Gastrocnemius medialis (tissue), 4 donors: ENCODE measurements at regions of chr1 and their contacts with region 1.

Region 1: DNA sequence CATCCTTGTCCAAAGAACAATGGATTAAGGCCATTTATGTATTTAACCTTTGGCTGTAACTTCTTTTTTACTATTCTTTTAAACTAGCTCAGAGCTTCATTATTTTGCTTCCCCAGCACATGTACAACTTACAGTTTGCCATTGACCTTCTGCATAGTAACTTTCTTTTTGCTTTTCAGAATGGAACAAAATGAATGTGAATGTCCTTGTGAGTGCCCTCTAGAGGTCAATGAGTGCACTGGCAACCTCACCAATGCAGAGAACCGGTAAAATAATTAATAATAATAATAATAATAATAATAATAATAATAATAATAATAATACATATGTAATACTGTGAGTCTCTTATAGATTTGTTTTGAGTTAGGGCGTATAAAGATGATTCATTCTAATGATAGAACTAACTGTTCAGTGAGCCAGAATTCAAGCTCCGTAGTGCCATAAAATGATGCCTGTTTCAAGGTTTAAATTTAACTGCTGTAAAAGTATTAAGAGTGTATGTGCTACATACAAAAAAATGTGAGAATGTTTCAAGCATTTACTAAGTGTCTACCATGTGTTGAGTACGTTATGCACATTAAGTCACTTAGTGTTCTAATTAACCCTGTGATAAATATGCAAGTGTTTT is 69.0 kb upstream of the RAVER2 start:
- DNase-seq: no peak
- ATAC-seq: no peak
- H3K4me3 ChIP-seq: no peak overlapping the region
- H3K27ac ChIP-seq: no peak overlapping the region
- H3K4me1 ChIP-seq: peaks cover under 1 to 6% of the 10 kb centered on the region in 2 donors
- H3K27me3 ChIP-seq: no peaks in the 10 kb centered on the region
- CTCF ChIP-seq: peak in 4 of 5 experiments; percentile 7 to 70 (median 34)
- POLR2A ChIP-seq: no peak

Region 2: GRCh38 chr1:64268653-64269557 is 406.9 kb before region 1 on chr1:
- in situ Hi-C with region 1: loop called (anchors 10 to 25 kb)
- intact Hi-C with region 1: loop called (anchors 2 kb)
- DNase-seq: peak; percentile 45 to 47
- ATAC-seq: peak; percentile 77 to 83
- H3K4me3 ChIP-seq: no peak overlapping the region
- H3K27ac ChIP-seq: no peak overlapping the region
- H3K4me1 ChIP-seq: no peaks in the 10 kb centered on the region
- H3K27me3 ChIP-seq: no peaks in the 10 kb centered on the region
- CTCF ChIP-seq: peak; percentile 52 to 79 (median 63)
- POLR2A ChIP-seq: no peak

Region 3: GRCh38 chr1:64469977-64470664 is 205.7 kb before region 1 on chr1 and contains the start of gene CACHD1:
- in situ Hi-C with region 1: loop called in 3 of 4 experiments (anchors 10 to 25 kb)
- intact Hi-C with region 1: loop called (anchors 5 kb)
- DNase-seq: peak; percentile 32 to 59
- ATAC-seq: peak; percentile 74 to 80
- H3K4me3 ChIP-seq: peak within 1 kb of the TSS; percentile 65 to 85 (median 76)
- H3K27ac ChIP-seq: peak within 1 kb of the TSS; percentile 65 to 78 (median 77)
- H3K4me1 ChIP-seq: peaks cover 8 to 16% of the 10 kb centered on the region in 2 donors
- H3K27me3 ChIP-seq: no peaks in the 10 kb centered on the region
- CTCF ChIP-seq: peak; percentile 21 to 56 (median 32)
- POLR2A ChIP-seq: peak in 1 of 2 donors; percentile 31
- total RNA-seq, gene CACHD1: 2.2 to 3.6 (median 2.9) TPM

Region 4: DNA sequence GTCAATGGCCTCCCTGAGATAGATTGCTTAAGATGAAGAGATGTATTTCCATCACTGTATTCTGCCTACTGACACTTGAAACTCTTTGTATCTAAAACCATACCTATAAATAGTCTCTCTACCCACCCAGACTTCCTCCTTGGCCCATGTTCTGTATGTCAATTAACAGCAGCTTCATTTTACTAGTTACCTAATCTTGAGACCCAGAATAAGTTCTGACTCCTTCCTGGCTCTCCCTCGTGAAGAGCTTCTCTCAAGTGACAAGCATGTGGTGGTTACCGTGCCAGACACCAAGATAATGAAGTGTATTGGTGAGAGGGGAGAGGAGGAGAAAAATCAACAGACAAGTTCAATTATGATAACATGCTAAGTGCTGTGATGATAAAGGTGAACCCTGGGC is 59.8 kb before region 1 on chr1:
- in situ Hi-C with region 1: no loop called
- intact Hi-C with region 1: loop called (anchors 5 kb)
- DNase-seq: peak; percentile 63 to 73
- ATAC-seq: peak; percentile 99 to 100
- H3K4me3 ChIP-seq: no peak overlapping the region
- H3K27ac ChIP-seq: peak overlapping the region; percentile 66 to 80 (median 76)
- H3K4me1 ChIP-seq: peaks cover 14 to 17% of the 10 kb centered on the region in 2 donors
- H3K27me3 ChIP-seq: no peaks in the 10 kb centered on the region
- CTCF ChIP-seq: no peak
- POLR2A ChIP-seq: peak in 1 of 2 donors; percentile 31

Region 5: DNA sequence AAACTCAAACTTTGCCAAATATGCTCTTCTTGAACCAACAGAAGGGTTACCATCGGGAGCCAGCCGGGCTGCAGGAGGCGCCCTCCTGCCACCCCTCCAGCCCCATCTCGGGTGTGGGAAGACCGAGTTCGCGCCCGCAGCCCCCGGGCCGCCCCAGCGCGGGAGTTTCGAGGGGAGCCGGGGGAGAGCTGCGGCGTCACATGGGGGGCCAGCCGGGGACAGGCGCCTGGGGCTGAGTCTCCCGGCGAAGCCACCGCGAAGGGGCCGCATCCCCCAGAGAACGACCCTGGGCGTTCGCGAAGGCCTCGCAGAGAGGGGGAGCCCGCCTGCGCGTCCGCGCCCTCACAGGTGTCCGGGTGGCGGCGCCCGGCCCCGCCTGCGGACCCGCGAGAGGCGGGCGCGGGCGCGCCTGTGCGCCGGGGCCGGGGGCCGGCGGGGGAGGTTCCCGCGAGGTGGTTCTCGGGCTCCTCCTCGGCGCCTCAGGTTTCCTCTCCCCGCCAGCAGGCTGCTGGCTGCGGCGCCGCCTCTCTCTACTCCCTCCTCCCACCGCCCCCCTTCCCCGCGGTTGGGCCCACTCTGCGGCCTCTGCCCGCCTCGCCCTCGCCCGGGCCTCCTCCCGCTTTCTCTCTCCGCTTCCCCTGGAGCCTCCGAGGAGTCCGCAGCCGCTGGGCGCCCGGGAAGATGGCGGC is 68.8 kb after region 1 on chr1 and contains the start of gene RAVER2:
- in situ Hi-C with region 1: no loop called
- intact Hi-C with region 1: loop called (anchors 5 kb)
- DNase-seq: peak; percentile 35 to 50
- ATAC-seq: peak; percentile 67 to 68
- H3K4me3 ChIP-seq: peak within 1 kb of the TSS; percentile 80 to 86 (median 83)
- H3K27ac ChIP-seq: peak within 1 kb of the TSS; percentile 82 to 89 (median 82)
- H3K4me1 ChIP-seq: peaks cover 10 to 40% of the 10 kb centered on the region in 2 donors
- H3K27me3 ChIP-seq: no peaks in the 10 kb centered on the region
- CTCF ChIP-seq: peak; percentile 19 to 55 (median 39)
- POLR2A ChIP-seq: peak; percentile 16 to 32
- total RNA-seq, gene RAVER2: 8.4 to 9.4 (median 9.1) TPM